CD8-positive, alpha-beta T cell (primary cell): ENCODE measurements at regions of chr1 and their contacts with region 1.

Region 1: DNA sequence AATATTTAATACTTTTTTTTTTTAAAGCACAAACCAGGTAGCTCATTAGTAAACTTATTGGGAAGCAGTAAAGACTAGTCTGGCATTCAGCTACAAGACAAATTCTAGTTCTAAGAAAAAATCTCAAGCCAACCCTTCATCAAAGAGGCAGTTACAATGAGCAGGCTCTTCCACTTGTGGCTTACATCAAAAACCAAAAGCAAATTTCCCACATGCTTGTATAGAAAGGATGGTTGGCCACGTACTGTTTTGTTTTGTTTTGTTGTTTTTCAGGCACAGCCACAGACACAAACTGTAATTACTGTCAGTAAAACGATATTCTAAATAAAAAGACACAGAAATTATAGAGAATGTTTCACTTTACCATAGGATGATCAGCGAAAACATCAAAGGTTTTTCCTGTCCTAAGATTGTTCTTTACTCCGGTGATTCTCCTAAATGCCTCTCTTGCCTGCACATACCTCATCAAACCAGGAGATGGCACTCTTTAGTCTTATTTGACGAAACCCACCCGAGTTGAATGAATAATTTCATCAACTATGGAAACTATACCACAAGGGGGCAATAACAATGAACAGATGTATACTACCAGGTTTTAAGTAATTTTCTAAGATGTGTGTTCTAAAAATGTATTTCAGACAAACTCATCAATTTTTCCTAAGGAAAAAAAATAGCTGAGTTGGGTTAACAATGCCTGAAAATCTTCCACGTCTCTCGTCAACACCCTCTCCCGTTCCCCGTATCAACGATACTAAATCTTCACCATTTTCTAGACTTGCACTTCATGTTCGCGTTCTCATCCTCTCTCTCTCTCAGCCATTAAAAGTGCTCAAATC is 26.9 kb downstream of the RPL5 start:
- DNase-seq: peak; percentile 9 to 88 (median 47)
- ATAC-seq: peak; percentile 97
- H3K4me3 ChIP-seq: peak overlapping the region in 1 of 2 experiments; percentile 4
- H3K4me3 Mint-ChIP-seq: peak overlapping the region; percentile 68
- H3K27ac ChIP-seq: no peak overlapping the region
- H3K27ac Mint-ChIP-seq: peak overlapping the region; percentile 73
- H3K4me1 ChIP-seq: peaks cover 8% of the 10 kb centered on the region
- H3K4me1 Mint-ChIP-seq: peaks cover 17% of the 10 kb centered on the region
- H3K27me3 ChIP-seq: no peaks in the 10 kb centered on the region
- H3K27me3 Mint-ChIP-seq: no peaks in the 10 kb centered on the region
- CTCF ChIP-seq: peak; percentile 98

Region 2: GRCh38 chr1:92872719-92873118 is 13.9 kb after region 1 on chr1:
- CTCF ChIA-PET with region 1: interaction called, 54 read pairs
- POLR2A ChIA-PET with region 1: no interaction called
- intact Hi-C with region 1: no loop called
- DNase-seq: no peak
- ATAC-seq: no peak
- H3K4me3 ChIP-seq: no peak overlapping the region
- H3K4me3 Mint-ChIP-seq: no peak overlapping the region
- H3K27ac ChIP-seq: no peak overlapping the region
- H3K27ac Mint-ChIP-seq: no peak overlapping the region
- H3K4me1 ChIP-seq: peaks cover 17% of the 10 kb centered on the region
- H3K4me1 Mint-ChIP-seq: peaks cover 30% of the 10 kb centered on the region
- H3K27me3 ChIP-seq: no peaks in the 10 kb centered on the region
- H3K27me3 Mint-ChIP-seq: no peaks in the 10 kb centered on the region
- CTCF ChIP-seq: no peak

Region 3: GRCh38 chr1:92913093-92913819 is 54.5 kb after region 1 on chr1:
- CTCF ChIA-PET with region 1: interaction called, 11 read pairs
- POLR2A ChIA-PET with region 1: no interaction called
- intact Hi-C with region 1: no loop called
- DNase-seq: no peak
- ATAC-seq: no peak
- H3K4me3 ChIP-seq: no peak overlapping the region
- H3K4me3 Mint-ChIP-seq: no peak overlapping the region
- H3K27ac ChIP-seq: no peak overlapping the region
- H3K27ac Mint-ChIP-seq: peak overlapping the region; percentile 2
- H3K4me1 ChIP-seq: no peaks in the 10 kb centered on the region
- H3K4me1 Mint-ChIP-seq: peaks cover 36% of the 10 kb centered on the region
- H3K27me3 ChIP-seq: no peaks in the 10 kb centered on the region
- H3K27me3 Mint-ChIP-seq: no peaks in the 10 kb centered on the region
- CTCF ChIP-seq: no peak

Region 4: DNA sequence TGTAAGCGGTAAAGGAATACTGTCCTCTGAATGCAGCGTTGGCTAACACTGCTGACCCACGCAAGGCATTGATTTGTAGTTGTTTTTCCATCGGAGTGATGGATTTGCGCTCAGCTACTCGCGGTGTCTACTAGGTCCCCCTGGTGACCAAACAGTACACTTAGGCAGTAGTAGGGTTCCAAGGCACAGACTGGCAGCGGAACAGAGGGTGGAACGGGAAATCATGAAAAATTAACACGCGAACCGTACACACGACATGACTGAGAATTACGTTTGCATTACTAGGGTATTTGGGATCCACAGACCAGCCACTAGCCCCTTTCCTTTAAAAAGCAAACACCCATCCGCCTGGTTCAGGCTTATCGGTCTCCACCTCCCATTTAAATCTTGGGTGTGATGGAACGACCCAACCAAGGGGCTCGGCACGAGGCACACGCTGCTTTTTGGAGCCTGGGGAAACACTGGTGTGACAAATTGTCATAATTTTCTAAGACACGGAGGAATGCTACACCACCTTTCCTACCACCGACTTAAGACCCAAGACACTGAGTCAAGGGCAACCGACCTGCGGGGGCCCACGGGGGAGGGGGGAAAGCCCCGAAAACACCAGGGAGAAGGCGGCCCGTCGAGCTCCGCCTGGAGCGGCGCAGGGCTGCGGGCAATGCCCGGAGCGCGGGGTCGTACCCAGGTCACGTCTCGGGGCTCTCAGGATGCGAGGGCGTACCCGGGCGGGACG is 101.8 kb after region 1 on chr1:
- CTCF ChIA-PET with region 1: interaction called, 193 read pairs
- POLR2A ChIA-PET with region 1: interaction called, 15 read pairs
- intact Hi-C with region 1: loop called (anchors 1 kb)
- DNase-seq: peak; percentile 40 to 90 (median 62)
- ATAC-seq: peak; percentile 41
- H3K4me3 ChIP-seq: peak overlapping the region; percentile 81 to 82
- H3K4me3 Mint-ChIP-seq: peak overlapping the region; percentile 92
- H3K27ac ChIP-seq: peak overlapping the region; percentile 85 to 87
- H3K27ac Mint-ChIP-seq: peak overlapping the region; percentile 96
- H3K4me1 ChIP-seq: peaks cover 57% of the 10 kb centered on the region
- H3K4me1 Mint-ChIP-seq: peaks cover 40% of the 10 kb centered on the region
- H3K27me3 ChIP-seq: no peaks in the 10 kb centered on the region
- H3K27me3 Mint-ChIP-seq: no peaks in the 10 kb centered on the region
- CTCF ChIP-seq: peak; percentile 58

Region 5: DNA sequence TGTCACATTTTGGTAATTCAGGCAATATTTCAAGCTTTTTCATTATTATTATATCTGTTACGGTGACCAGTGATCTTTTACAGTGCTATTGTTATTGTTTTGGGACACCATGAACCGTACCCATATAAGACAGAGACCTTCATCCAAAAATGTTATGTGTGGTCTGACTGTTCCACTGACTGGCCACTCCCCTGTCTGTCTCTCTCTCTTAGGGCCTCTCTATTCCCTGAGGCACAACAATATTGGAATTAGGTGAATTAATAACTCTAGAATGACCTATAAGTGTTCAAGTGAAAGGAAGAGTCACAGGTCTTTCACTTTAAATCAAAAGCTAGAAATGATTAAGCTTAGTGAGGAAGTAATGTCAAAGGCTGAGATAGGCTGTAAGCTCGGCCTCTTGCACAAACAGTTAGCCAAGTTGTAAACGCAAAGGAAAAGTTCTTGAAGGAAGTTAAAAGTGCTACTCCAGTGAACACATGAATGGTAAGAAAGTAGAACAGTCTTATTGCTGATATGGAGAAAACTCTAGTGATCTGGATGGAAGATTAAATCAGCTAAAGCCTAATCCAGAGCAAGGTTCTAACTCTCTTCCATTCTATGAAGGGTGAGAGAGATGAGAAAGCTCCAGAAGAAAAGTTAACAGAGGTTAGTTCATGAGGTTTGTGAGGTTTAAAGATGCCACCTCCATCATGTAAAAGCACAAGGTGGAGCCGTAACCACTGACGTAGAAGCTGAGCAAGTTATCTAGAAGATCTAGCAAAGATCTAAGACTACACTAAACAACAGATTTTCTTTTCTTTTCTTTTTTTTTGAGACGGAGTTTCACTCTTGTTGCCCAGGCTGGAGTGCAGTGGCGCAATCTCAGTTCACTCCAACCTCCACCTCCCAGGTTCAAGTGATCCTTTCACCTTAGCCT is 122.2 kb after region 1 on chr1:
- CTCF ChIA-PET with region 1: interaction called, 49 read pairs
- POLR2A ChIA-PET with region 1: no interaction called
- intact Hi-C with region 1: no loop called
- DNase-seq: peak; percentile 20 to 93 (median 48)
- ATAC-seq: peak; percentile 93
- H3K4me3 ChIP-seq: peak overlapping the region in 1 of 2 experiments; percentile 12
- H3K4me3 Mint-ChIP-seq: peak overlapping the region; percentile 66
- H3K27ac ChIP-seq: peak overlapping the region; percentile 72 to 93
- H3K27ac Mint-ChIP-seq: peak overlapping the region; percentile 96
- H3K4me1 ChIP-seq: peaks cover 23% of the 10 kb centered on the region
- H3K4me1 Mint-ChIP-seq: peaks cover 25% of the 10 kb centered on the region
- H3K27me3 ChIP-seq: no peaks in the 10 kb centered on the region
- H3K27me3 Mint-ChIP-seq: no peaks in the 10 kb centered on the region
- CTCF ChIP-seq: no peak

Region 6: GRCh38 chr1:93061895-93062792 is 203.4 kb after region 1 on chr1:
- CTCF ChIA-PET with region 1: interaction called, 8 read pairs
- POLR2A ChIA-PET with region 1: no interaction called
- intact Hi-C with region 1: loop called (anchors 1 to 2 kb)
- DNase-seq: peak in 6 of 9 experiments; percentile 25 to 72 (median 37)
- ATAC-seq: peak; percentile 72
- H3K4me3 ChIP-seq: no peak overlapping the region
- H3K4me3 Mint-ChIP-seq: no peak overlapping the region
- H3K27ac ChIP-seq: no peak overlapping the region
- H3K27ac Mint-ChIP-seq: no peak overlapping the region
- H3K4me1 ChIP-seq: no peaks in the 10 kb centered on the region
- H3K4me1 Mint-ChIP-seq: peaks cover 4% of the 10 kb centered on the region
- H3K27me3 ChIP-seq: no peaks in the 10 kb centered on the region
- H3K27me3 Mint-ChIP-seq: peaks cover 12% of the 10 kb centered on the region
- CTCF ChIP-seq: peak; percentile 48